Activated B cell treated with CpG ODN at 0.5 μM for 24 hours (primary cell): ENCODE measurements at regions of chr2 and their contacts with region 1.

Region 1: DNA sequence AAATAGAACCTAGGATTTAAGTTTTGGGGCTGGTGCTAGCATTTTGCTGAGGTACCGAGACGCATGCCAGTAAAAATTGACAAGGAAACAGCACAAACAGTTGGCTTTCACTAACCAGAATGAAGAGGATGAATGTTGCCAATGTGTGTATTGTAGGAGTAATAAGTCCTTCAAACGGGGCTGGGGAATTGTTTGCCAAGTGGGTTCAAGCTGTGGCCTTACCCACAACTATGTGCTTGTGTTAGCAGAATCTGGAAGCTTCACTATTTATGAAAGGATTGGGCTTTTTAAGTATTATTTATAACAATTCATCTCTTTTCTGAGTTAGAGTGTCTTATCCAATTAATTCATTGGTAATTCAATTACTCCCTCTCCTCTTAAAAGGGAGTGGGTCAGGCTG is 15.0 kb upstream of the KIF5C start:
- DNase-seq: no peak
- ATAC-seq: no peak
- H3K4me3 Mint-ChIP-seq: no peak overlapping the region
- H3K27ac Mint-ChIP-seq: no peak overlapping the region
- H3K4me1 Mint-ChIP-seq: no peaks in the 10 kb centered on the region
- H3K27me3 Mint-ChIP-seq: peaks cover 16% of the 10 kb centered on the region
- CTCF ChIP-seq: no peak

Region 2: DNA sequence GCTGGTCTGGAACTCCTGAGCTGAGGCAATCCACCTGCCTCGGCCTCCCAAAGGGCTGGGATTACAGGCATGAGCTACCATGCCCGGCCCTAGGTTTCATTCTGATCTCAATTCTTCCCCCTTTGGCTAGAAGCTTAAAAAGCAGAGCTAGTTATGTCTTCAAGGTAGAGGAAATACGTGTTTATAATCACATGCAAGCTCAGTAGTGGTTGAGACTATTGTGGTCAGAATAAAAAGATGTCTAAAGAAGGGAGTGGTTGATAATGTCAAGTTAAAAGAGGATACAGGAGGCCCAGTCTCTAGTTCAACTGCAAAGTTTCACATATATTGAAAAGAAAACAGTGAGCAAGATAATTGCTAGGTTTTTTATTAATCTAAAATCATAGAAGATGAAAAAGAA is 1823.0 kb before region 1 on chr2:
- CTCF ChIA-PET with region 1: no interaction called
- POLR2A ChIA-PET with region 1: no interaction called
- intact Hi-C with region 1: loop called (anchors 5 kb)
- DNase-seq: no peak
- ATAC-seq: no peak
- H3K4me3 Mint-ChIP-seq: no peak overlapping the region
- H3K27ac Mint-ChIP-seq: no peak overlapping the region
- H3K4me1 Mint-ChIP-seq: no peaks in the 10 kb centered on the region
- H3K27me3 Mint-ChIP-seq: no peaks in the 10 kb centered on the region
- CTCF ChIP-seq: no peak

Region 3: GRCh38 chr2:148842050-148842449 is 18.0 kb before region 1 on chr2:
- CTCF ChIA-PET with region 1: no interaction called
- POLR2A ChIA-PET with region 1: no interaction called
- intact Hi-C with region 1: no loop called
- DNase-seq: no peak
- ATAC-seq: no peak
- H3K4me3 Mint-ChIP-seq: no peak overlapping the region
- H3K27ac Mint-ChIP-seq: no peak overlapping the region
- H3K4me1 Mint-ChIP-seq: no peaks in the 10 kb centered on the region
- H3K27me3 Mint-ChIP-seq: peaks cover 20% of the 10 kb centered on the region
- CTCF ChIP-seq: no peak